ENCODE measurements at regions of chr5 and their contacts with region 1.

Region 1: DNA sequence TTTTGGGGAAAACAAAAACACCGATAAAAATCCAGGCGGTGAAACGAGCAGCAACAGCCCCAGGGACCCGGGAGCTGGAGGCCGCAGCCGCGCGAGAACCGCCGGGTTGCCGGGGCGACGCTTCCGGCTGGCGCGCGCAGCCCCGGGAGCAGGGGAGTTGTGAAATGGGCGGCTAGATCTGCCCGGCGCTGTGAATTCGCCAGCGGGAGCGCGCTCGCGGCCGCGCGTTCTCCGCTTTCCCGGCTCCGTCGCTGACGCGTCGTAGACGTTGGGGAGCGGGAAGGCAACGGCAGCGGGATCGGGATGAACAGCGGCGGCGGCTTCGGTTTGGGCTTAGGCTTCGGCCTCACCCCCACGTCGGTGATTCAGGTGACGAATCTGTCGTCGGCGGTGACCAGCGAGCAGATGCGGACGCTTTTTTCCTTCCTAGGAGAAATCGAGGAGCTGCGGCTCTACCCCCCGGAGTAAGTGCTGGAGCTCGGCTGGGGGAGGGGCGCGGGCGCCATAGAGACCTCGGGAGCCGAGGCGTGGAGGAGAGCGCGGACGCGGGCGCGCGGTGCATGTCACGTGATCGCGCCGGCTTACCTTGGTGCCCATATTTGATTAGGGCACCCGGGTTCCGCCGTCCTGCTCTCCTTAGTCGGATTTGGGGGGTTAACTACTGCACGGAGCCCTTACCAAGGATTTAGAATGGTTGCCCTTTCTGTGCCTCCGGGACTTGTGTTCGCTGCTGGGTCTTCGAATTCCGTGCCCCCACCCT is at the start of gene SREK1:
- DNase-seq: peak; percentile 91
- ATAC-seq: peak; percentile 86
- H3K4me3 Mint-ChIP-seq: peak within 1 kb of the TSS; percentile 97
- H3K27ac Mint-ChIP-seq: peak within 1 kb of the TSS; percentile 99
- H3K4me1 Mint-ChIP-seq: peaks cover 35% of the 10 kb centered on the region
- H3K27me3 Mint-ChIP-seq: no peaks in the 10 kb centered on the region
- total RNA-seq, gene SREK1: 66.6 to 68.9 TPM

Region 2: DNA sequence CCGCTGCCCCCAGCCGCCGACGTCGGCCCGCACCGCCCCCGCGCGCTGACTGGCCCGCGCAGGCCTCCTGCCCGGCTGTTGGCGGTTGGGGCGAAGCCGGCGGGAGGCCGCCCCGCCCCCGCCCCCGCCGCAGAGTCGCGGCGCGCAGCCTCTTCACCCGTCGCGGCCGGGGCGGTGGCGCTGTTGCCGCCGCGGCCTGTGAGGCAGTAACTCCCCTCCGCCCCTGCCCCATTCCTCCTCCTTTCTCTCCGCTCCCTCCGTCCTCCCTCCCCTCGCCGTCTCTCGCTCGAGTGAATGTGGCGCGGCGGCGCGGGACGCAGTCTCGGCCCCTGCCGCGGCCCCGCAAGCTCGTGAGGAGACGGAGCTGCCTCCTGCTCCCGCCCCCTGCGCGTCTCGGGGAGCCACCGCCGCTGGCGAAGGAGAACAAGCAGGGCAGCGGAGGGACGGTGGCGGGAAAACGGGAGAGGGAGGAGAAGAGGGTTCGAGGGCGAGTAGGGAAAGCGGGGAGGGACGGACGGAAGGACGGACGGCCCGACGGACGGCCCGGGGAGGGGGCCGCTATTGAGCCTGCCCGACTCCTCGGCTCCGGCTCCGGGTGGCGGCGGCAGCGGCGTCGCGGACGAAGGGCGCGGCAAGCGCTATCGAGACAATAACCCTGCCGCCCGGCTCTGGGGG is 218.5 kb before region 1 on chr5:
- POLR2A ChIA-PET with region 1: interaction called, 34 read pairs
- DNase-seq: no peak
- ATAC-seq: peak; percentile 62
- H3K4me3 Mint-ChIP-seq: peak overlapping the region; percentile 89
- H3K27ac Mint-ChIP-seq: peak overlapping the region; percentile 94
- H3K4me1 Mint-ChIP-seq: peaks cover 23% of the 10 kb centered on the region
- H3K27me3 Mint-ChIP-seq: peaks cover 14% of the 10 kb centered on the region

Region 3: DNA sequence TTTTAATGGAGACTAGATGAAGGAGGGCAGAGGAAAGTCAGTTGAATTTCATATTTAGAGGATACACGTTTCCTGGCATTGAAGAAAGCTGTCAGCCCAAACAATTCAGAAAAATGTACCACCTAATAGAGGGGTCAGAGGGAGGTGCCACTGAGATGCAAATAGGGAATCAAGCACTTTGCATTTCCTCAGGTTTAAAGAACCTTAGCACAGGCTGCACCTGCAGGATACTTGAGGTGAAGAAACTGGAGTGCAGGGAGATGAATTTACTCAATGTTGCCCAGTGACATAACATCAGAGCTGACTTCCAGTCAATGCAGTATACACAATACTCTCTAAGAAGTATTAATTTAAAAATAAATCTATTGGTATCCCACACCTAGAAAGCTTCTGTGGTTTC is 384.9 kb after region 1 on chr5:
- POLR2A ChIA-PET with region 1: no interaction called
- DNase-seq: no peak
- ATAC-seq: no peak
- H3K4me3 Mint-ChIP-seq: no peak overlapping the region
- H3K27ac Mint-ChIP-seq: no peak overlapping the region
- H3K4me1 Mint-ChIP-seq: no peaks in the 10 kb centered on the region
- H3K27me3 Mint-ChIP-seq: peaks cover 34% of the 10 kb centered on the region

Measured in activated naive CD8-positive, alpha-beta T cell treated with anti-CD3 and anti-CD28 coated beads, Interleukin-2, amount 10 ng/mL, durations not matched to agents 7 days and 5 days (primary cell).